ENCODE measurements at regions of chr7 and their contacts with region 1.

Region 1: GRCh38 chr7:5665094-5666025 is 116.1 kb downstream of the RNF216 start:
- DNase-seq: peak; percentile 92

Region 2: DNA sequence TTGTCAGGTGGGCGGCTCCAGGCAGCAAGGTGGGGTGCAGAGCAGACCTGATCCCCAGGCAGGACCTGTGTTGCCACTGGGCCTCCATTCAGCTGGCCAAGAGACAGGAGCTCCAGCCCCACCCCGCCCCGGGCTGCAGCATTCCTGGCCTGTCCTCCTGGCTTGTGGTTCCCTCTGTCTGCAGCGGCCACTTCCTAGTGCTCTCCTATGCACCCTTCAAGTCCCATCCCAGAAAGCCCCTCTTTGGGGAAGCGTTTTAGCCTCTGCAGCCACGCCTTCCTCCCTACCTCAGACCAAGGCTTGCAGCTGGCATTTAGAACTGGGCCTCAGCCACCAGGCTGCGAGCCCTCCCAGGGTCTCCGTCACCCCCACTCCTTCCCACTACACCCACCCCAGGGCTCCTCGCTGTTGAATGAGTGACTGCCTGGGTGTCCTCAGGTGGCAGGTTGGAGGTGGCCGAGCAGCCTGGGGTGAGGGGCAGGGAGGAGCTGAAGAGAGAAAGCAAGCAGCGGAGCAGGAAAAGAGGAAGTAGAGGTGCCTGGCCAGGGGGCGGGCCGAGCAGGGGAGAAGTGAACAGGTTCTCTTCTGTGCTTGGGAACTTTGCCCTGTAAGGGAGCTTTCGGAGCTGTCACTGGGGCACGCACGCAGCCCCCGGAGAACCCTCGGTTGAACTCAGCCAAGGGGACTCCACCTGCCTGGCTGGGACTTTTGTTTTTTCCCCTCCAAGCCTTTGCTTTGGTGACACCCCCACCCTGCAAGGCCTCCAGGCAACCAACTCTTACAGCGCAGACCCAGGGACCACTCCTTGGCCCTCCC is 132.6 kb before region 1 on chr7:
- in situ Hi-C with region 1: no loop called
- DNase-seq: no peak

Region 3: DNA sequence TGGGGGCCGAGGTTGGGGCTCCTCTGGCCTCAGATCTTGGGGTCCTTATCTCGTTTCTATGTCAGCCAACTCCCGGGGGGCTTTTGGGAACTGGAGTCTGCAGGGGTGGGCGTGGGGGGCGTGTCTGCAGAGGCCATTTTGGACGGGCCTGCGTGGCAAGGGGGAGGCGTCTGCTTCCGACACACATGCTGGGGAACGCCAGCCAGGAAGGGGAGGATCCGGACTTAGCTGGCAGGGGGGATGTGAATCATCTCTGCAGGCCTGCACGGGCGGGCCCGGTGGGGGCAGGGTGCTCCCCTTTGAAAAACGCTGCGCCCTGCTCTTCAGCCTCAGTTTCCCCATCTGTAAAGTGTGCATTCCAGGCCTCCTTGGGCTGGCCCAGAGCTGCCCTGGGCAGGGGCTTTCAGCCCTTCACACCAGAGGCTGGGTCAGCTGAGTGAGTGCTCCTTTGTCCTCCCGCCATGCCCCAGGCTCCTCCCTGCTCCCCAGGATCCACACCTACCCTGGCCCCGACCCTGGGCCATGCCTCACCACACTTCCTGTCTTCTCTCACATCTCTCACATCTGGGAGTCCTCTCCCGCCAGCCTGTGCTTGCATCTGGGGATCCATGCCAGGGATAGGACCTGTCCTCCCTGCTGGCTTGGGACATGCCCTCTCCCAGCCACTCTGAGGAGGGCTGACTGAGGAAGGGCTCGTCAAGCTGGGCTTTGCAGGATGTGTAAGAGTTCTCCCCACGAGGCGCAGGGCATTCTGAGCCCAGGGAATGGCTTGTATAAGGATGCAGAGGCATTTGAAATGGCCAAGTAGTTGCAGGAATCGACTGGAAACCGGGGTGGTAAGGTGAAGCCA is 69.1 kb before region 1 on chr7:
- in situ Hi-C with region 1: loop called (anchors 5 kb)
- DNase-seq: no peak

Region 4: GRCh38 chr7:5629941-5630340 is 35.4 kb before region 1 on chr7:
- in situ Hi-C with region 1: no loop called
- DNase-seq: peak; percentile 93